Naive thymus-derived CD4-positive, alpha-beta T cell (primary cell): ENCODE measurements at regions of chr5 and their contacts with region 1.

Region 1: GRCh38 chr5:19902316-19902934 is 85.6 kb downstream of the CDH18 start:
- DNase-seq: no peak
- ATAC-seq: no peak
- H3K4me3 ChIP-seq: no peak overlapping the region
- H3K4me3 Mint-ChIP-seq: no peak overlapping the region
- H3K27ac ChIP-seq: no peak overlapping the region
- H3K27ac Mint-ChIP-seq: no peak overlapping the region
- H3K4me1 ChIP-seq: no peaks in the 10 kb centered on the region
- H3K4me1 Mint-ChIP-seq: no peaks in the 10 kb centered on the region
- H3K27me3 ChIP-seq: no peaks in the 10 kb centered on the region
- H3K27me3 Mint-ChIP-seq: no peaks in the 10 kb centered on the region

Region 2: DNA sequence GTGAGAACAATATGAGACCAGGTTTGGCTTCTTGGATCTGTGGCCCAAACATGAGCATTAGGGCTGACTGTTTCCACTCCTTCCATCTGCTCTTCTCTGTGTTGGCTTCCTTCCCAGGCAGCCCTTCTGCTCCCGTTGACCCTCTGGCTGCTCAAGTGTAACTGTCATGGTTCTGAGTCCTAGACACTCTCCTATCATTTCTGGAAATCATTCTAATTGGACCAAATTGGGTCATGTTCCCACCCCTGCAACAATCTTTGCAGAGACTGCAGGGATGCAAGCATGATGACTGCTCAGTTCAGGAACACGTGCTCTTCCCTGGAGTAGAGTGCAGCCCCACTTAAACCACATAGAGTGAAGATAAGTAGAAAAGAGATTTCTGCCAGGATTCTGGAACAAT is 1526.8 kb before region 1 on chr5:
- CTCF ChIA-PET with region 1: no interaction called
- POLR2A ChIA-PET with region 1: no interaction called
- intact Hi-C with region 1: loop called in 1 of 2 experiments (anchors 5 kb)
- DNase-seq: no peak
- ATAC-seq: no peak
- H3K4me3 ChIP-seq: no peak overlapping the region
- H3K4me3 Mint-ChIP-seq: no peak overlapping the region
- H3K27ac ChIP-seq: no peak overlapping the region
- H3K27ac Mint-ChIP-seq: no peak overlapping the region
- H3K4me1 ChIP-seq: no peaks in the 10 kb centered on the region
- H3K4me1 Mint-ChIP-seq: no peaks in the 10 kb centered on the region
- H3K27me3 ChIP-seq: no peaks in the 10 kb centered on the region
- H3K27me3 Mint-ChIP-seq: no peaks in the 10 kb centered on the region

Region 3: GRCh38 chr5:19928562-19929421 is 26.4 kb after region 1 on chr5:
- CTCF ChIA-PET with region 1: no interaction called
- POLR2A ChIA-PET with region 1: no interaction called
- intact Hi-C with region 1: no loop called
- DNase-seq: no peak
- ATAC-seq: no peak
- H3K4me3 ChIP-seq: no peak overlapping the region
- H3K4me3 Mint-ChIP-seq: no peak overlapping the region
- H3K27ac ChIP-seq: no peak overlapping the region
- H3K27ac Mint-ChIP-seq: no peak overlapping the region
- H3K4me1 ChIP-seq: no peaks in the 10 kb centered on the region
- H3K4me1 Mint-ChIP-seq: no peaks in the 10 kb centered on the region
- H3K27me3 ChIP-seq: no peaks in the 10 kb centered on the region
- H3K27me3 Mint-ChIP-seq: no peaks in the 10 kb centered on the region

Region 4: GRCh38 chr5:20241351-20241750 is 338.9 kb after region 1 on chr5:
- CTCF ChIA-PET with region 1: no interaction called
- POLR2A ChIA-PET with region 1: no interaction called
- intact Hi-C with region 1: no loop called
- DNase-seq: no peak
- ATAC-seq: no peak
- H3K4me3 ChIP-seq: no peak overlapping the region
- H3K4me3 Mint-ChIP-seq: no peak overlapping the region
- H3K27ac ChIP-seq: no peak overlapping the region
- H3K27ac Mint-ChIP-seq: no peak overlapping the region
- H3K4me1 ChIP-seq: no peaks in the 10 kb centered on the region
- H3K4me1 Mint-ChIP-seq: no peaks in the 10 kb centered on the region
- H3K27me3 ChIP-seq: no peaks in the 10 kb centered on the region
- H3K27me3 Mint-ChIP-seq: no peaks in the 10 kb centered on the region